K562 (cell line): ENCODE measurements at regions of chr20 and their contacts with region 1.

Region 1: DNA sequence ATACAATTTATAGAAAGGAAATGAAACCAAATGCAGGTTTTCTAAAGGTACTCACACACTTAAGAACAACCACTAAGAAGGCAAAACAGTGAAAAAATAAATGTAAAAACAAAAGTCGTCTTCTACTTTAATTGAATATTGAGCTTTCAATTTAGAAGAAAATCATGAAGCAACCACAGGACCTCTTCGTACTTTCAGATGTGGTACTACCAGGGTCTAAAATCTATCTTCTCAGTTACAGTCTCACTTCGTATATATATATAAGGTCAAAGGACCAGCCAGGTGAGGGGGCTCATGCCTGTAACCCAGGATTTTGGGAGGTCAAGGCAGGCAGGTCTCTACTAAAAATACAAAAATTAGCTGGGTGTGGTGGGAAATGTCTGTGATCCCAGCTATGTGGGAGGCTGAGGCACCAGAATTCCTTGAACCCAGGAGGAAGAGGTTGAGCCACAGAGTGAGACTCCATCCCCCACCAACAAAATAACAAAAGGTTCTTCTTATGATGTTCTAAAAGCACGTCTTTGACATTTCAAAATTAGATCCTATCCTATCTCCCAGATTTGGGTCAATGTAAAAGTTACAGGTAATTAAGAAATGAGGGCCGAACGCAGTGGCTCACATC is 12.5 kb downstream of the ROMO1 start:
- DNase-seq: no peak
- ATAC-seq: no peak
- H3K4me3 ChIP-seq: no peak overlapping the region
- H3K27ac ChIP-seq: no peak overlapping the region
- H3K4me1 ChIP-seq: no peaks in the 10 kb centered on the region
- H3K27me3 ChIP-seq: no peaks in the 10 kb centered on the region
- CTCF ChIP-seq: no peak
- EP300 ChIP-seq: no peak
- POLR2A ChIP-seq: peak; percentile 21; the same call in 1 of the 2 replicates
- RAD21 ChIP-seq: no peak

Region 2: GRCh38 chr20:35699127-35699975 is 12.3 kb before region 1 on chr20 and contains the starts of genes NFS1 and ROMO1:
- CTCF ChIA-PET with region 1: no interaction called
- POLR2A ChIA-PET with region 1: interaction called, 39 read pairs
- in situ Hi-C with region 1: no loop called
- intact Hi-C with region 1: no loop called
- DNase-seq: peak; percentile 90 to 97 (median 94)
- ATAC-seq: peak; percentile 94
- H3K4me3 ChIP-seq: peak within 1 kb of the TSS; percentile 96
- H3K27ac ChIP-seq: peak within 1 kb of the TSS; percentile 92
- H3K4me1 ChIP-seq: peaks cover 10 to 14% of the 10 kb centered on the region in 2 experiments; a peak in 4 of 5 replicates
- H3K27me3 ChIP-seq: no peaks in the 10 kb centered on the region
- CTCF ChIP-seq: peak; percentile 29 to 34 (median 32); a peak in 5 of 6 replicates
- EP300 ChIP-seq: no peak
- POLR2A ChIP-seq: peak; percentile 91
- RAD21 ChIP-seq: no peak
- polyA plus RNA-seq, gene NFS1: 11.5 to 13.9 TPM
- polyA plus RNA-seq, gene ROMO1: 635 to 741 TPM

Region 3: GRCh38 chr20:35735828-35736470 is 24.2 kb after region 1 on chr20:
- CTCF ChIA-PET with region 1: no interaction called
- POLR2A ChIA-PET with region 1: interaction called, 10 read pairs
- in situ Hi-C with region 1: no loop called
- intact Hi-C with region 1: no loop called
- DNase-seq: no peak
- ATAC-seq: no peak
- H3K4me3 ChIP-seq: no peak overlapping the region
- H3K27ac ChIP-seq: no peak overlapping the region
- H3K4me1 ChIP-seq: peaks cover 0 to 13% of the 10 kb centered on the region in 2 experiments; a peak in 2 of 5 replicates
- H3K27me3 ChIP-seq: no peaks in the 10 kb centered on the region
- CTCF ChIP-seq: no peak
- EP300 ChIP-seq: no peak
- POLR2A ChIP-seq: no peak
- RAD21 ChIP-seq: no peak